ENCODE measurements at regions of chr2 and their contacts with region 1.

Region 1: DNA sequence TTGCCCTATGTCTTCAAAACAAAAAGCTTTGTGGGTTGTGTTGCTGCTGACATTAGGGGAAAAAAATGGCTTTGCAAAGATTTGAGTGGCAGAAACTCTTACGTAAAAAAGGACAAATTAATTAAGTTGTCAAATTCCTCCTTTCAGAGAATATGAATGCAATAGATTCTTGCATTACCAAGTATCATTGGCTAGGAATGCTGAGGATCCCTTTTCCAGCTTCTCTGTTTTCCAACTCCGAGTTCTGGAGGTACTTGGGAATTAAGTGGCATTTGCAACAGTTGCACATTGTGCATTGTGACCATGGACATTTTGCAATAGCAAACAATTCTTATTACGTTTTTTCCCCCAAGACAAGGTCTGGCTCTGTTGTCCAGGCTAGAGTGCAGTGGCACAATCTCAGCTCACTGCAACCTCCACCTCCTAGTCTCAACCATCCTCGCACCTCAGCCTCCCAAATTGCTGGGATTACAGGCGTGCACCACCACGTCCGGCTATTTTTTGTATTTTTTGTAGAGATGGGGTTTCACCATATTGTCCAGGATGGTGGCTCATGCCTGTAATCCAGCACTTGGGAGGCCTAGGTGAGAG is 29.9 kb upstream of the PPP1CB start:
- DNase-seq: no peak

Region 2: DNA sequence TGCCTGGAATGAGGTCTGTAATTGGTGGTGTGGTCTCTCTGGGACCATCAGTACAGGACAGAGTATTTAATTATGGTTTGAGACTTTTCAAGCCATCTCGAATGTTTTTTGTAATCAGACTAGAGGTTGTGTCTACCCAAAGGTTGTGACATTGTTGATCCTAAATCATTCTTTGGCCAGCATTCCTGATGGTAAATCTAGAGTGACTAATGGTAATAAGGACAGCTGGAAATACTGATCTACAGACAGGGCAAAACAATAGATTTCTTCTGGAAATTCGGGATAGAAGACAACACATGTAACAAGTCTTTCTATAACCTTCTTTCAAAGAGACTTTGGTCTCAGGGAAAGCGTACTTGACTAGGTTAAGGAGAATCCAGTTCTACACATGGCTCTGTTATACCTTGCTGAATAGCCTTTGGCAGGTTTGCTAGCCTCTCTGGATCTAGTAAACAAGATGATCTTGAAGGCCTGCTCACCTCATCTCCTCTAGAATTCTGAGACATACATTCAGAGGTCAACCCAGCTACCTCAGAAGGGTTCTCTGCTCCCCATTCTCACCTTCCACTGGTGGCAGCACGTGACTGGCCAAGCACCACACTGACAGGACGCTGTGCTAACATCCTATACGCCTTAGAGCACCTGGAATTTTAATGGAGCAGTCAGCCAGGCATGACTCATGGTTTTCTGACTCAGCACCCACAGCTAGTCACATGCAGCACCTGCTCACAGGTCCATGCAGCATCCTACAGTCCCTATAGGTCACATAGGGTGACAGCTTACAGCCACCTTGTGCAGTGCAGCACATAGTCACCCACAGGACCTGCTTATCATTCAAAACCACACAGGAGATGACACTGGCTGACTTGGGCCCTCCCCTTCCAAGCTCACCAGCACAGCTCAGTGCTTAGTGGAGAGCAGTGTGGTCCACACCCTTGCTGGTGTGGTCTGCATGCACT is 213.6 kb before region 1 on chr2:
- intact Hi-C with region 1: no loop called
- DNase-seq: no peak

Region 3: GRCh38 chr2:30679426-30680088 is 1957.9 kb after region 1 on chr2:
- intact Hi-C with region 1: loop called in 1 of 2 experiments (anchors 5 kb)
- DNase-seq: no peak

Measured in posterior vena cava (tissue), 2 donors.